Motor neuron (in vitro differentiated cells): ENCODE measurements at regions of chr6 and their contacts with region 1.

Region 1: DNA sequence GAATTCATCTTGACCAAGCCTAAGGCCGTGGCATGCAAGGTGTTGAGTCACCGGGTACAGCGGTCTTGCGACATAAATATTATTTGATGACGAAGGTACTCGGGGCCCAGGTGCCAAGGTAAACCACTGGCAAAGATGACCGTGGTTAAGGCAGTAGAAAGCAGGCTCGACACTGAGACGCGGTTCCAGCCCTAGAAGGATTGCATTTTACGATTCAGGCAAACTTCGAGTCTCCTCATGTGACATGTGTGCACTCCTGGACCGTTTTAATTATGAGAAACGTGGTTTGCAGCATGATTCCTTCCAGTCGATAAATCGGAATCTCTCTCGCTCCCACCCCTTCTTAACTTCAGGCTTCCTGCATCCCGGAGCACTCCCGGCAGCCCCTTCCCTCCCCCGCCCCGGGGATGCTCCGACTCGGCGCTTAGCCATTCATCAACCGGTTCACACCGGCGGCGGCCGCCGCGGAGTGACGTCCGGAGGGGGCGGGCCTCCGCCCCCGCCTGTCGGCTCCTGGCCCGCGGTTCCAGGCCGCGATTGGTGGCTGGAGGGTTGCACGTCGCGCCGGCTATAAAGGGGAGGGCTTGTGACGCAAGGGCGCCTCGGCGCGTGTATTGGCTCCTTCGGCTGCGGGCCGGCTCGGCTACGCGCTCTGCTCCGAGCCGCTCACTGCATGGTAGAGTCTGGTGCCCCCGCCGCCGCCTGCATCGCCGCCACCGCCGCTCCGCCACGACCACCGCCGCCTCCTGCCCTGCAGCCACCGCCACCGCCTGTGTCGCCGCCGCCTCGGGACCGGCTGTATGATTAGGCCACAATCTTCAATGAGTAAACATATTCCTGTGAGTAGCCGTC is at the starts of genes LOC128125822 and PTP4A1:
- ATAC-seq: peak; percentile 67 to 94 (median 92)
- H3K4me3 ChIP-seq: peak within 1 kb of the TSS; percentile 77 to 96 (median 89)
- H3K27ac ChIP-seq: peak within 1 kb of the TSS; percentile 94 to 96
- H3K4me1 ChIP-seq: peaks cover 12 to 27% of the 10 kb centered on the region in 2 donors
- total RNA-seq, gene PTP4A1: 34.7 to 79.5 (median 57.4) TPM

Region 2: DNA sequence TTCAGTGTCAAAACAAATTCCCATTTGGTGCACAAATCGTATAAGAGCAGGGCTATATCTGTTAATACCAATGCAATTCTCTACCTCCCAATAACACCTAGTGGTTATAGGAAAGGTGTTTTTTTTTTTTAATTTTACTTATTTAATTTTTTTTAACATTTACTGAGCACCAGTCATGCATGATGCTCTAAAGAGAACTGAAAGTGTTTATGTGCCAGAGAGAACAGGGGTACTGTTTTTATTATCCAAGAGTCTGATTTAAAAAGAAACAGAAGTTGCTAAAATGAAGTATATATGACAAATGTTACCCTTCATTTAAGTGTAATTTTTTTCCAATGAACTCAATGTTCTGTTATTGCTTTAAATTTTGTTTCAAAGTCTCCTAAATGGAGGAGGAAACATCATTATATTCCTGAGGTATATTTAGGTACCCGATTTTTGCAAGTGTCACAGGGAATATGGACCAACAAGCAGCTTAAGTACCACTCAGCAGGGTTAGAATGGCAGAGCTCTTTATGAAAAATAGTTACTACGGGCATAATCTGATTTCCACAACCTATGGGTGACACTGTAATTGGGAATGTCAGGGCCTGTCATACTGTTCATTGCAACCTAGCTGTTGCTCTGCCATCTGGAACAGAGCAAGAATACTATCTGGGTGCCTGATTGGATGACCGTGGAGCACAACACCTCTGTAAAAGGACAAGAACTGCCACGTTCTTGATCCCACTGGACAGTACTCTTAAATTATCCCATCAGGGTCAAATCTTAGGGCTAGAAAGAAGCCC is 1481.5 kb before region 1 on chr6:
- in situ Hi-C with region 1: no loop called
- ATAC-seq: no peak
- H3K4me3 ChIP-seq: no peak overlapping the region
- H3K27ac ChIP-seq: no peak overlapping the region
- H3K4me1 ChIP-seq: peaks cover 0 to 4% of the 10 kb centered on the region in 2 donors

Region 3: GRCh38 chr6:63389191-63389844 is 182.8 kb before region 1 on chr6:
- in situ Hi-C with region 1: loop called in 1 of 9 experiments (anchors 25 kb)
- ATAC-seq: no peak
- H3K4me3 ChIP-seq: no peak overlapping the region
- H3K27ac ChIP-seq: no peak overlapping the region
- H3K4me1 ChIP-seq: no peaks in the 10 kb centered on the region

Region 4: DNA sequence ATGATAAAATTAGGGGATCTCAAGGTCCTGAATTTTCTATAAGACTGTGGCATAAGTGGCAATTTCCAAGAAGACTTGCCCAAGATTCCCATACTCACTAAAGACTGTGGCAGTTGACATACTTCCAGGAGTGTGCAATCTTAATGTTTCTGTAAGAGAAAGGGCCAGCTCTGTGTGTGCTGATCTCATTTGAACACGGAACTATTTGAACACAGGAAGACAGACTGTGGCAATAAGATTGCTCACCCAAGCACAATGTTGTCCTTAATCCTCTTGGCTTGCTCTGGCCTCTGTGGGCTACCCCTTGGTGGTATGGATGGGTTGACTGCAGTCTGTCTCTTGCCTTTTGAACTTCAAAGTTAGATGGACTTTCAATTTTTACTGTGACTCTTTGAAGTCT is 214.9 kb after region 1 on chr6:
- in situ Hi-C with region 1: no loop called
- ATAC-seq: no peak
- H3K4me3 ChIP-seq: no peak overlapping the region
- H3K27ac ChIP-seq: no peak overlapping the region
- H3K4me1 ChIP-seq: no peaks in the 10 kb centered on the region